Activated B cell treated with CpG ODN at 0.5 μM for 24 hours (primary cell): ENCODE measurements at regions of chr20 and their contacts with region 1.

Region 1: GRCh38 chr20:7841971-7842310 is 98.3 kb downstream of the HAO1 start:
- DNase-seq: no peak
- ATAC-seq: no peak
- H3K4me3 Mint-ChIP-seq: no peak overlapping the region
- H3K27ac Mint-ChIP-seq: no peak overlapping the region
- H3K4me1 Mint-ChIP-seq: no peaks in the 10 kb centered on the region
- H3K27me3 Mint-ChIP-seq: peaks cover 3% of the 10 kb centered on the region
- CTCF ChIP-seq: no peak

Region 2: DNA sequence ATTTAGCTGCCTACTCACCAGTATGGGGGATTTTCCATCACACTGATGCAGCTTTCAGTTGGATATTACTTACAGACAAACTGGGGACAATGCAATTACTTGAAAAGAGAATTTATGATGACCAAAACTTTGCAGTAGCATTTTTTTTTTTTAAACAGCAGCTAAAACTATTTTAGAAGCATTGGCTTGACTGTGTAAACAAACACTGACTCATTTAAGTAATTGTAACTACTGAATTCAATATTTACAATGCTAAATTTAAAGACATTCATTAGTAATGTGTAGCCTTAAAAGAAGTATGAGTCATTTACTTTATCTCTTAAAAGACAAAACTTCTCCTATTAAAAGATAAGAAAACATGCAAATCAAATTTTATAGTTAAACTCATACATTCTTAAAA is 1423.2 kb before region 1 on chr20:
- CTCF ChIA-PET with region 1: no interaction called
- POLR2A ChIA-PET with region 1: interaction called, 12 read pairs
- intact Hi-C with region 1: no loop called
- DNase-seq: no peak
- ATAC-seq: no peak
- H3K4me3 Mint-ChIP-seq: no peak overlapping the region
- H3K27ac Mint-ChIP-seq: no peak overlapping the region
- H3K4me1 Mint-ChIP-seq: no peaks in the 10 kb centered on the region
- H3K27me3 Mint-ChIP-seq: peaks cover 2% of the 10 kb centered on the region
- CTCF ChIP-seq: no peak